AG04449 (cell line): ENCODE measurements at regions of chr6 and their contacts with region 1.

Region 1: GRCh38 chr6:26553635-26554446 is 15.7 kb downstream of the HMGN4 start:
- DNase-seq: peak; percentile 76
- H3K4me3 ChIP-seq: peak overlapping the region; percentile 65
- CTCF ChIP-seq: no peak

Region 2: DNA sequence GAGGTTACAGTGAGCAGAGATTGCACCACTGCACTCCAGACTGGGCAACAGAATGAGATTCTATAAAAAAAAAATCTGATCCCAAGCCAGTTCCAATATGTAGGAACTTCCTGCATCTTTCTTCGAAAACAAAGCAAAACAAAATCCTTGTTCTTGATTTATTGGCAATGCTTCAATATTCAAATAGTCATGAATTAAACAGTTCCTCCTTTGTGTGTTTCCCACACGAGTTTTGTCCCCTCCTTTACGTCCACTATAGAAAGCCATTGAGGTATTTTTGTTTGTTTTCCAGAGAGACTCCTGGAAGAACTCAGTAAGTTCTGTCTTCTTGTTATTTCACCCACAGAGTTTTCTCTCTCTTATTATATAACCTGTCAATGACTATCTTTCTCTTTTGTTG is 46.2 kb before region 1 on chr6:
- CTCF ChIA-PET with region 1: no interaction called
- POLR2A ChIA-PET with region 1: no interaction called
- DNase-seq: no peak
- H3K4me3 ChIP-seq: no peak overlapping the region
- CTCF ChIP-seq: no peak

Region 3: DNA sequence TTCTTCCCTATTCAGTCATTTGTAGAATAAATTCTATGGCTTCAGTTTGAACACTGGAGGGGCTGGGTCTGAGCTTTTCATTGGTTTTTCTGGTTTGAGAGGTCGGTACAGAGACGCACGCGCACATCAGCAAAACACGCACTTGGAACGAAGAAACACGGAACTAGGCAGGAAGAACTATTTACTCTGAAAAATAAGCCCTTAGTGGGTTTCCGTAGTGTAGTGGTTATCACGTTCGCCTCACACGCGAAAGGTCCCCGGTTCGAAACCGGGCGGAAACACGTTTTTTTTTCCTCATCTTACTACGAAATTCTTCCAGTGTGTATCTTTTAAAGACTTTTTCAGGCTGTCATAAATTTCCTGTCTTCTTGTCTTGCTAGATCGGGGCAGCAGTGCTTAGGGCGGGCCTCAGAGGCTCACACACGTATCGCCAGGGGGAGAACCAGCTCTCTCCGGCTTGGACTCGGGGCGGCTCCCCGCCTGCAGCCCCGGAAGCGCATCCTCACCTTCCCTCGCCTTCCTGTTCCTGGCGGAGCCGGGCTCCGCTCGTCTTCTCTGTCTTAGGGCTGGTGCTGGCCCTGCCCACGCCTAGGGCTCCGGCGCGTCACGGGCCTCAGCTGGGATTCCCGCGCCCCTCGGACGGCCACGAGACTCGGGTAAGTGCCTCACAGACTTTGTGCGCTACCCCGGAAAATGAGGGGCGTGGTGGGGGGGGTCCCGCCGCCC is 15.8 kb before region 1 on chr6 and contains the start of gene HMGN4:
- CTCF ChIA-PET with region 1: interaction called, 12 read pairs
- POLR2A ChIA-PET with region 1: interaction called, 12 read pairs
- DNase-seq: no peak
- H3K4me3 ChIP-seq: peak within 1 kb of the TSS; percentile 78
- CTCF ChIP-seq: no peak

Region 4: DNA sequence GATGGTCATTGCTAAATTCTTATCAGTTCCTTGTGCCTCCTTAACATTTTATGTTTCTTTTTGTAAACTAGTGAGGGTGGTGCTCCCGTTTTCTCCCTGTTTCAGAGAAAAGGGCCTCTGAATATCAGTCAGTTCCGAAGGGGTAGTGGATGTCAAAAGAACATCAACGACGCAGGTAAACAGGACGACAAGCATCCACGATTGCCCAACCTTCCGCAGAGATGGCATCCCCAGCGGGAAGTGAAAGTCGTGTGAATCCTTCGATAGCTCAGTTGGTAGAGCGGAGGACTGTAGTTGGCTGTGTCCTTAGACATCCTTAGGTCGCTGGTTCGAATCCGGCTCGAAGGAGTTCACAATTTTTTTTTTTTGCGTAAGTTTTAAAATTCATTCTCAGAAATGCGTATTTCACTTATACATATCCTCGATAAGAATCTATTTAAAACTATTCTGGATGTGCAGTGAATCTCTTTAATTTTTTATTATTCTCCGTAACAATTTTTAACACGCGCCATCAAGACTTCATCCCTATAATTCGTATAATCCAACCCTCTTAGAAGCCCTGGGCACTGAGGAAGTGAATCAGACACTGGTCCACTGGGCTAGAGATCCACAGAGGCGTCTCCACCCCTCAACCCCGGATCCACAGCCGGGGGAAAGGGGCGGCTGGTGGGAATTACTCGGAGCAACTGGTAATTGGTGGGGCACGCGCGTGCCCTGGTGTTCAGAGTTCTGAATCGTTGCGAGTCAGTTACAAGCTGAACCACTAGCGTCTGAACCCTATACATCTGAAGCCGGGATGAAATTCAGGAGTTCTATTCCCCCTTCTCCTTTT is 15.0 kb after region 1 on chr6:
- CTCF ChIA-PET with region 1: interaction called, 22 read pairs
- POLR2A ChIA-PET with region 1: interaction called, 7 read pairs
- DNase-seq: no peak
- H3K4me3 ChIP-seq: peak overlapping the region; percentile 80
- CTCF ChIP-seq: peak; percentile 18